Dorsolateral prefrontal cortex (tissue), 120 donors: ENCODE measurements at regions of chr2 and their contacts with region 1.

Region 1: DNA sequence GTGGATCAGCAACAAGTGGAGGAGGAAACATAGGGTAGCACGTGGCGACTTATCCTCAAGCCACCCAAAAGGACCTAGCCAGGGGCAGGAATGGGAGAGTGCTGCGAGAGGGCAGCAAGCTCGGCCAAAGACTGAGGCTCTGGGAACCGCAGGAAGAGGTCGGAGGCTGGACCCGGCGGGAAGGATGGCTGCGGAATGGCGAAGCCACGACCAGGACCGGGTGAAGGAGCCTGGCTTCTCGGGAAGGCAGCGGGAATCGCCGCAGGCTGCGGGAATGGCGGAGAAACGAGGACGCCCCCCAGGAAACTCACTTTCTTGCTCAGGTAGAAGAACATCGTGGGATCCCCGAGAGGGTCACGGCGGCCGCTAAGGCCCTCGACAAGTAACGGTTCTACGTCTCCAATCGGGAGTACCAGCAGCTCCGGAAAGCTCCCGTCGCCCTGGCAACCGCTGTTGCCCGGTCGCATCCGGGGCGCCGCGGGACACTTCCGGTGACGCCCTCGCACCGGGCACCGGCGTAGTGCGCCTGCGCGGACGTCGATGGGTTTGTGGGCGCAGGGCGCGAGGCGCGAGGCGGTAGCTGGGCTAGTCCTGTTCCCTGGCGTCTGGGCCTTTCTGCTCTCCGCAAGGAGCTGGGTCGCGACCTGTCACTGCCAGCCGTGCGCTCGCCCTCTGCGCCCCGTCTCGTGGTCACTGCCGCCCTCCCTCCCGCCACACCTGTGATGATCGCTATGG is at the start of gene WDR35:
- DNase-seq: peak; percentile 83 to 96 (median 87)
- H3K4me3 ChIP-seq: peak within 1 kb of the TSS; percentile 61 to 97 (median 87)
- H3K27ac ChIP-seq: peak within 1 kb of the TSS in 41 of 59 donors; percentile 5 to 90 (median 61)
- H3K27me3 ChIP-seq: no peaks in the 10 kb centered on the region
- CTCF ChIP-seq: peak in 23 of 56 donors; percentile 14 to 50 (median 31)
- total RNA-seq, gene WDR35: 7.1 to 18.1 (median 12.9) TPM

Region 2: GRCh38 chr2:18200771-18201170 is 1789.1 kb before region 1 on chr2:
- intact Hi-C with region 1: no loop called
- DNase-seq: peak in 1 of 10 donors; percentile 35
- H3K4me3 ChIP-seq: no peak overlapping the region
- H3K27ac ChIP-seq: no peak overlapping the region
- H3K27me3 ChIP-seq: peaks cover 0 to 4% (median 0%) of the 10 kb centered on the region in 45 donors
- CTCF ChIP-seq: no peak

Region 3: DNA sequence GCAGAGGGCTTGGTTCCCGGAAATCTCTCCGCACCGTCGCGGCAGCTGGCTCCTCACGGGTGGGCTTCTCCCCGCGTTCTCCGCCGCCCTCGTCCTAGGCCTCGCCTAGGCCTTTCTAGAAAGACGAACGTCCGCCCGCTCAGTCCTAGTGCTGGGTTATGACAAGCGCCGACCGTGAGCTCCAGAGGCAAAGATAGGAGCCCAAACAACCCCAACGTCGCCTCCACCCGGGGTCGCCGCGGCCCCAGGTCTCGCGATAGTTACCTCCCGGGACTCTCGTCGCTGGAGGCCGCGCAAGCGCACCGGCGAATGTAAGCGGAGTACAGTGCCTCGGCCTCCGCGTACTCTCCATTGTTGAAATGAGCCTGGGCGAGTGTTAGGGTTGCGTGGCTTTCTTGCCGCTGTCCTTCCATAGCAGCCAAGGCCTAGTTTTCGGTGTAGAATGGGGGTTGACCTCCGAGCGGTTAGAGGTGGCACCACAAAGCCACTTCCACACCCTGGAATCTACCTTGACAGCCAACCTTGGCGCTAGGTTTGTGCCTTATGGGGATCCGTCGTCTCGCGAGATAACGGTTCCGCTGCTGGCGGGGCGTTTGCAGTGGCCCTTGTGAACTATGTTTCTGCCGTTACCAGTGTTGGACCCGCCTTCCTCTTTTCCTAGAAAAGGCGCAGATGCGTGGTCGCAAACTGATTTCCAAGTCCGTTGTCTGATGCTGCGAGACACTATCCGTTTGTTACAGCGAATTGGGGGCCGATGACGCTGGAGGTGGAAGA is 88.2 kb before region 1 on chr2 and contains the start of gene TTC32:
- intact Hi-C with region 1: loop called in 1 of 2 experiments (anchors 5 kb)
- DNase-seq: peak; percentile 87 to 94 (median 92)
- H3K4me3 ChIP-seq: peak within 1 kb of the TSS; percentile 75 to 99 (median 90)
- H3K27ac ChIP-seq: peak within 1 kb of the TSS; percentile 85 to 100 (median 97)
- H3K27me3 ChIP-seq: no peaks in the 10 kb centered on the region
- CTCF ChIP-seq: peak in 36 of 56 donors; percentile 2 to 60 (median 30)
- total RNA-seq, gene TTC32: 8.8 to 38.7 (median 18.3) TPM